Esophagus muscularis mucosa (tissue), 4 donors: ENCODE measurements at regions of chr4 and their contacts with region 1.

Region 1: DNA sequence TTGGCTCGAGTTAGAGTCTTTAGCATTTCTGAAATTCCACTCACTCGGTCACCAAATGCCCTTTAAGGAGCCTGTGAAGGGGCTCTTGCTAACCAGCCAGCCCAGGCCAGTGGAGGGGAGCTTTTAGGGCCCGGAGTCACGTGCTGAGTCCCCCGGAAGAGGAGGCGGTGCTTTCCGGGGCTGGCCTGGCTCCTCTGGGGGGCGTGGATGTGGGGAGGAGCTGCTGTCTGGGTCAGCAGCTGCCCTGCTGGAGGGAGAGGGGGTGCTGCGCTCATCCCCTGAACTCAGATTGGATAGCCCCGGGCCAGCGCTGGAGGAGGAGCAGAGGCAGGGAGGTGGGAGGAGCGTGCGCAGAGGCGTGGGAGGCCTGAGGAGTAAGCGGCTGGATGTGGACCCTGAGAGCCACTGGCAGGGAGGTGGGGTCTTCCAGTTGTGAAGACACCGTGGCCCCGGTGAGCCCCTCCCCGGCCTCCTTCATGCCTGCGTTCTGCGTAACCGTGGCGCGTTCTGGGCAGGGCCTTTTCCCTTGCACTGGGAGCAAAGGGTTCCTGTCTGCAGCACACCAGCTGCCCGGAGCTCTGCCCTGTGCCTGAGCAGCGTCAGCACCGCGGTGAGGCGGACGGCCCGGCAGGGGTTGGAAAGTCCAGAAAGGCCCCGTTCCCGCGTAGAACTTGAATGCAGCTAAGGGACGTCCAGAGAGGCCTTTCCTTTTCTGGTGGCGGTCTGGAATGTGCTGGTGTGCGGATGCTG is 19.7 kb downstream of the MAEA start:
- DNase-seq: peak; percentile 98
- H3K4me3 ChIP-seq: peak overlapping the region; percentile 53 to 57 (median 56)
- H3K27ac ChIP-seq: peak overlapping the region; percentile 65 to 84 (median 76)
- H3K4me1 ChIP-seq: peaks cover 32 to 53% (median 44%) of the 10 kb centered on the region in 4 donors
- H3K27me3 ChIP-seq: no peaks in the 10 kb centered on the region
- CTCF ChIP-seq: peak in 1 of 3 experiments; percentile 18
- EP300 ChIP-seq: no peak
- POLR2A ChIP-seq: no peak

Region 2: GRCh38 chr4:1289207-1290164 is 19.9 kb before region 1 on chr4 and contains the start of gene MAEA:
- intact Hi-C with region 1: loop called (anchors 1 kb)
- DNase-seq: peak; percentile 99
- H3K4me3 ChIP-seq: peak within 1 kb of the TSS; percentile 84 to 99 (median 96)
- H3K27ac ChIP-seq: peak within 1 kb of the TSS; percentile 83 to 96 (median 92)
- H3K4me1 ChIP-seq: peaks cover 45 to 50% (median 49%) of the 10 kb centered on the region in 4 donors
- H3K27me3 ChIP-seq: no peaks in the 10 kb centered on the region
- CTCF ChIP-seq: no peak
- EP300 ChIP-seq: no peak
- POLR2A ChIP-seq: peak; percentile 20
- total RNA-seq, gene MAEA: 54.5 to 63.1 (median 59.8) TPM

Region 3: GRCh38 chr4:1346781-1347409 is 37.5 kb after region 1 on chr4 and contains the start of gene UVSSA:
- intact Hi-C with region 1: loop called (anchors 5 kb)
- DNase-seq: peak; percentile 100
- H3K4me3 ChIP-seq: peak within 1 kb of the TSS; percentile 96 to 99 (median 98)
- H3K27ac ChIP-seq: peak within 1 kb of the TSS; percentile 96 to 100 (median 98)
- H3K4me1 ChIP-seq: peaks cover 21 to 50% (median 46%) of the 10 kb centered on the region in 4 donors
- H3K27me3 ChIP-seq: no peaks in the 10 kb centered on the region
- CTCF ChIP-seq: no peak
- EP300 ChIP-seq: no peak
- POLR2A ChIP-seq: peak; percentile 82
- total RNA-seq, gene UVSSA: 8.9 to 16.5 (median 13.1) TPM

Region 4: DNA sequence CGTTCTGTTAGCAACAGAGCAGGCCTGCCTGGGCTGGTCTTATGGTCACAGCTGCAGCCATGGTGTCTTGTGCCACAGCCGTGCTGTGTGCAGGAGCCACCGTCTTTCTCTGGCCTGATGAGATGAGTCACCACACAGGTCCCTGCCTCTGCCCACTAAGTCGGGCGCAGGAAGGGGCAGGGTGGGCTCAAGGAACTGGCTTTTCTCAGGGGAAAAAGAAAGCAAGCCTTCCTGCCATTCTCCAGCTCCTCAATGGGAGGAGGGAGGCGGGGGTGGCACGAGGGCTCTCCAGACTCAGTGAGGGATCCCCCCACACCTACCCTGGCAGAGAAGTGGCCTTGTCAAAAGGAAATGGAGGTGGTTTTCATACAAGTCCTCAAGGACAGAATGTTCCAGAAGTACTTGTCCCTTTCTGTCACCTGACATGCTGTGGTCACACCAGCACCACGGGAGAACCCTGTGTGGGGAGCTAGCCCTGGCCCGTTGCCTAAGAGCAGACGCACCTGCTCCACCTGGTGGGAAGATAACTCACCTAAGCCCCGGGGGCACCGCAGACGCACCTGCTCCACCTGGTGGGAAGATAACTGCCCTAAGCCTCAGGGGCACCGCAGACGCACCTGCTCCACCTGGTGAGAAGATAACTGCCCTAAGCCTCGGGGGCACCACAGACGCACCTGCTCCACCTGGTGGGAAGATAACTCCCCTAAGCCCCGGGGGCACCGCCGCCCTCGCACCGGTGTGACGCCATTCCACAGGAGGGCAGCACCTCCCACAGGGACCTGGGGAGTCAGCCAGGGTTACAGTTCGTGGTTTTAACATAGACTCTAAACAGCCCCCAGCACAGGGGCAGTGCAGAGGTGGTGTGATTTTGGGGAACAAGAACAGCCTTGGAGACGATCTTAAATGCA is 56.1 kb after region 1 on chr4:
- intact Hi-C with region 1: no loop called
- DNase-seq: no peak
- H3K4me3 ChIP-seq: no peak overlapping the region
- H3K27ac ChIP-seq: no peak overlapping the region
- H3K4me1 ChIP-seq: no peaks in the 10 kb centered on the region
- H3K27me3 ChIP-seq: no peaks in the 10 kb centered on the region
- CTCF ChIP-seq: no peak
- EP300 ChIP-seq: no peak
- POLR2A ChIP-seq: no peak

Region 5: DNA sequence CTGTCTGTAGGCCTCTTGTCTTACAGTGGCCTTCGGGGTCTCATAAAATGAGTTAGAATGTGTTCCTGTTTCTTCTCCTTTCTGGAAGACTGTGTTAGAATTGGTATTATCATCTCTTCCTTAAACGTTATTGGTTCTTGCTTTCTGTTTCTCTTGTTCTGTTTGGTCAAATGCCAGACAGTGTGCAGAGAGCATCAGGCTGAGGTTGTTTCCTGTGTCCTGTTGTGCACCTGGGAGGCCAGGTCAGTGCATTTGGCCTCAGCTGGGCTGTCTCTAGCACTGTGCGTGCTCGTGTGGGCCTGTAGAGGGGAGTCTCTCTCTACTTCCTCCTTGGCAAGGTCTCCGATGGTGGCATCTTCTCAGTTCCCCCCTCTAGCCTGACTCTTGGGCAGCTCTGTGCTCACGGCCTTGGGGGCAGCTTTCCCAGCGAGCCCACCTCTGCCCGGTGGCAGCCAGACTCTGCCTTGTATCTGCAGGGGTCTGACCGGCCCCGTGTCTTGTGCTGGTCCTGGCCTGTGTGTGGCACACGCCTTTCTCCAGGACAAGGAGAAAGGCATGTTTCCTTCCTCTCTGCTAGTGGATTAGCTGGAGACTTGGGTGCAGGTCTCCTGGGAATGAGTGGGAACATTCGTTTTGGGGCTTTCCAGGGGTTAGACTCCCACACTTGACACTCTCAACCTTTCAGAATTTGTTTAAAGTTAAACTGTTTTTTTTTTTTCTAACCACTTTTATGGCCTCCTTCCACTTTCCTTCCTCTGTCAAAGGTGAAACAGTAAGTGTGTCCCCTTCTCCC is 1289.3 kb after region 1 on chr4:
- intact Hi-C with region 1: no loop called
- DNase-seq: no peak
- H3K4me3 ChIP-seq: no peak overlapping the region
- H3K27ac ChIP-seq: peak overlapping the region in 3 of 4 donors; percentile 15 to 51 (median 47)
- H3K4me1 ChIP-seq: peaks cover 50 to 76% (median 60%) of the 10 kb centered on the region in 4 donors
- H3K27me3 ChIP-seq: no peaks in the 10 kb centered on the region
- CTCF ChIP-seq: peak in 1 of 3 experiments; percentile 21
- EP300 ChIP-seq: no peak
- POLR2A ChIP-seq: no peak